GM18951 (cell line): ENCODE measurements at regions of chr16 and their contacts with region 1.

Region 1: GRCh38 chr16:31427441-31428278 is 500 bp downstream of the COX6A2 start:
- POLR2A ChIP-seq: no peak

Region 2: GRCh38 chr16:30984669-30985400 is 442.8 kb before region 1 on chr16 and contains the start of gene HSD3B7:
- in situ Hi-C with region 1: loop called (anchors 25 kb)
- POLR2A ChIP-seq: no peak

Region 3: GRCh38 chr16:31224092-31224955 is 203.3 kb before region 1 on chr16:
- in situ Hi-C with region 1: no loop called
- POLR2A ChIP-seq: no peak

Region 4: GRCh38 chr16:31785126-31785525 is 357.5 kb after region 1 on chr16:
- in situ Hi-C with region 1: no loop called
- POLR2A ChIP-seq: no peak